Psoas muscle (tissue), 8 donors: ENCODE measurements at regions of chr5 and their contacts with region 1.

Region 1: GRCh38 chr5:140295414-140295813 is 7.5 kb downstream of the PFDN1 start:
- DNase-seq: no peak
- ATAC-seq: peak; percentile 94 to 98 (median 97)
- H3K4me3 ChIP-seq: no peak overlapping the region
- H3K27ac ChIP-seq: peak overlapping the region; percentile 83
- H3K4me1 ChIP-seq: peaks cover 81% of the 10 kb centered on the region
- H3K27me3 ChIP-seq: no peaks in the 10 kb centered on the region
- CTCF ChIP-seq: no peak

Region 2: GRCh38 chr5:140261403-140262171 is 33.8 kb before region 1 on chr5:
- intact Hi-C with region 1: loop called (anchors 5 kb)
- DNase-seq: peak; percentile 60 to 82
- ATAC-seq: peak; percentile 93 to 97 (median 94)
- H3K4me3 ChIP-seq: peak overlapping the region; percentile 35
- H3K27ac ChIP-seq: peak overlapping the region; percentile 92
- H3K4me1 ChIP-seq: peaks cover 40% of the 10 kb centered on the region
- H3K27me3 ChIP-seq: no peaks in the 10 kb centered on the region
- CTCF ChIP-seq: no peak

Region 3: DNA sequence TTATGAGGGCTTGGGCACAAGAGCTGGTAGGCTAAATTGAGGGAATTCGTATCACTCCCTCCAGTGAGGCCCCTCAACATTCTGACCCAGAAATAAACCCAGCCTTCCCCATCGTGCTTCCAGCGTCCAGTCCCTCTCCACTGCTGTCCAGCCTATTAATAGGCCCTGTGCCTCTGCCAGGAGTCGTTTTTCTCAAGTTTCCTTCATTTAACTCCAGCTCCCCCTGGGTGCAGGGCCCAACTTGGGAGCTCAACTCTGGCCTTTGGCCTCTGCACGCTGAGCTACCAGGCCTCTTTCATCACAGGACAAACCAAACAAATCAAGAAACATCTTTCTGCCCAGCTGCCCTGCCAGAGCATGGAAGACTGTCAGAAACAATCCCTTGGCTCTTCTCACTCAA is 41.0 kb after region 1 on chr5:
- intact Hi-C with region 1: loop called (anchors 5 kb)
- DNase-seq: no peak
- ATAC-seq: peak in 3 of 4 donors; percentile 14 to 43 (median 16)
- H3K4me3 ChIP-seq: no peak overlapping the region
- H3K27ac ChIP-seq: peak overlapping the region; percentile 94
- H3K4me1 ChIP-seq: peaks cover 63% of the 10 kb centered on the region
- H3K27me3 ChIP-seq: no peaks in the 10 kb centered on the region
- CTCF ChIP-seq: no peak